Activated CD8-positive, alpha-beta T cell treated with anti-CD3 and anti-CD28 coated beads, Interleukin-2, amount 10 ng/mL, durations not matched to agents 7 days and 5 days (primary cell): ENCODE measurements at regions of chr17 and their contacts with region 1.

Region 1: GRCh38 chr17:27236717-27237315 is 57.1 kb upstream of the WSB1 start:
- DNase-seq: peak; percentile 83
- ATAC-seq: peak; percentile 65
- H3K4me3 Mint-ChIP-seq: no peak overlapping the region
- H3K27ac Mint-ChIP-seq: no peak overlapping the region
- H3K4me1 Mint-ChIP-seq: peaks cover 20% of the 10 kb centered on the region
- H3K27me3 Mint-ChIP-seq: peaks cover 11% of the 10 kb centered on the region

Region 2: DNA sequence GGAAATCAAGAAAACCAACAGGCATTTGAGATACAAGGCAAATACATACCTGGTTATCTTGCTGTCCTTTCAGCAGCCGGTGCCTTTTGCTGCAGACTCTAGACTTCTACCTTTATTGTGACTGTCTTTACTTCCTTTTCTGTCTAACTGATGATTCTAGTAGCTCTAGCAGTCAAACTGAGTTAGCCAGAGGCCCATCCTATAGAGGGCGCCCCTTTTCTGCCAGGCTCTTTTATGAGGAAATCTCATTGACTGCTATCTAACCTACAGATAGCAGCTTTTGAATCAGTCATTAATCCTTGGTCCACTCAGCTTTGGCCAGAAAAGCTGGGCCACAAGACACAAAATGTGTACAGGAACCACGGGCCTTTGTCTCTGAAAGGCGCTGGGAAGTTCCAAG is 30.4 kb before region 1 on chr17:
- CTCF ChIA-PET with region 1: interaction called, 10 read pairs
- POLR2A ChIA-PET with region 1: no interaction called
- DNase-seq: no peak
- ATAC-seq: no peak
- H3K4me3 Mint-ChIP-seq: no peak overlapping the region
- H3K27ac Mint-ChIP-seq: no peak overlapping the region
- H3K4me1 Mint-ChIP-seq: no peaks in the 10 kb centered on the region
- H3K27me3 Mint-ChIP-seq: peaks cover 12% of the 10 kb centered on the region

Region 3: DNA sequence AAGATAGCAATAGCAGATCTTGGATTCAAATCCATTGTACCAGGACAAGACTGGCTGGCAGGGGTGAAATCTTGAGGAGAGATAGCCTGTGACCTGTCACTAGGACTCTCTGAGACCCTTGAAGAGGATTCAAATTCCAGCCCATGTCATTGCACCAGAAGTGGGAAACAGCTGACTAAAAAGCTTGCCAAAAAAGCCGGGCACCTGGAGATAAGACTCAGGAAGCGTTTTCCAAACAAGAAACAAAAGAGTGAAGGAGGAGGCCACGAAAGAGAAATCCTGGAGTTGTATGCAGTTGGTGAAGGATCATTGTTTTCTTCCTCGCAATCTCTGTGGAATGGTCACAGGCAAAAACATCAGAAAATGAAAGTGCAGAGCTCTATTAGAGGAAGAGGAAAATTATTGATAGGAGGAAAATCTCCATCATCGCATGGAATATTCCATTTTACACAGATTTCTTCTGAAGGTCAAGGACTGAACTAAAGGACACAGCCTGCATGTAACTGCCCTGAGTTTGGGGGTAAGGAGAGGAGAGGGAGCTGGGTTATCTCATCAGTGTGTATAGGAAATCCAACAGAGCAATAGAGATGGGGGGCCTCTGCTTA is 48.1 kb after region 1 on chr17:
- CTCF ChIA-PET with region 1: interaction called, 14 read pairs
- POLR2A ChIA-PET with region 1: no interaction called
- DNase-seq: no peak
- ATAC-seq: no peak
- H3K4me3 Mint-ChIP-seq: no peak overlapping the region
- H3K27ac Mint-ChIP-seq: no peak overlapping the region
- H3K4me1 Mint-ChIP-seq: peaks cover 4% of the 10 kb centered on the region
- H3K27me3 Mint-ChIP-seq: peaks cover 7% of the 10 kb centered on the region

Region 4: GRCh38 chr17:27332485-27333409 is 95.9 kb after region 1 on chr17:
- CTCF ChIA-PET with region 1: interaction called, 116 read pairs
- POLR2A ChIA-PET with region 1: interaction called, 3 read pairs
- DNase-seq: peak; percentile 92
- ATAC-seq: peak; percentile 98
- H3K4me3 Mint-ChIP-seq: peak overlapping the region; percentile 66
- H3K27ac Mint-ChIP-seq: peak overlapping the region; percentile 75
- H3K4me1 Mint-ChIP-seq: peaks cover 21% of the 10 kb centered on the region
- H3K27me3 Mint-ChIP-seq: no peaks in the 10 kb centered on the region

Region 5: DNA sequence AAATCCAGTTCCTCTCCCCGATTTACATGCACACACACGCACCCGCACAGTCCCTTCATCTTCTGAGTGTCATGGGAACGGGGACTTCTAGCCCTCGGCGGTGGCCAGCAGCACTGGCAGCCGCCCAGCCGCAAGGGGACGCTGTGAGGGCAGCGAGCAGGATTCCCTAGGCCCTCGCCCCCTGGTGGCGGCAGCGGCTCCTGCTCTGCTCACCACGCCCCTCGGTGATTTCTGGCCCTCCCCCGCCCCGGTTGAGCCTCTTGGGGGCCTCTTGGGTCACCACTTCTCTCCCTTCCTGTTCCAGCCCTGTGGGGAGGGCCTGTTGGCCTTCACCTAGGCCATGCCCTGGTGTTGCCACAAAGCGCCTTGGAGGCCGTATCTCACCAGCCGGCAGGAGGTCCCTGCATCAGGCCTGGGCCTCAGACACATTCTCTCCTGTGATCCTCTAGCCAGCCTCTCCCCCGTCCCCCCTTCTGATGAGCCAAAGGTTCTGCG is 144.2 kb after region 1 on chr17:
- CTCF ChIA-PET with region 1: interaction called, 32 read pairs
- POLR2A ChIA-PET with region 1: no interaction called
- DNase-seq: peak; percentile 83
- ATAC-seq: peak; percentile 91
- H3K4me3 Mint-ChIP-seq: no peak overlapping the region
- H3K27ac Mint-ChIP-seq: no peak overlapping the region
- H3K4me1 Mint-ChIP-seq: peaks cover 7% of the 10 kb centered on the region
- H3K27me3 Mint-ChIP-seq: peaks cover 22% of the 10 kb centered on the region

Region 6: GRCh38 chr17:27489045-27489715 is 252.4 kb after region 1 on chr17:
- CTCF ChIA-PET with region 1: no interaction called
- POLR2A ChIA-PET with region 1: no interaction called
- DNase-seq: no peak
- ATAC-seq: no peak
- H3K4me3 Mint-ChIP-seq: no peak overlapping the region
- H3K27ac Mint-ChIP-seq: peak overlapping the region; percentile 26
- H3K4me1 Mint-ChIP-seq: peaks cover 29% of the 10 kb centered on the region
- H3K27me3 Mint-ChIP-seq: no peaks in the 10 kb centered on the region